ENCODE measurements at regions of chr12 and their contacts with region 1.

Region 1: DNA sequence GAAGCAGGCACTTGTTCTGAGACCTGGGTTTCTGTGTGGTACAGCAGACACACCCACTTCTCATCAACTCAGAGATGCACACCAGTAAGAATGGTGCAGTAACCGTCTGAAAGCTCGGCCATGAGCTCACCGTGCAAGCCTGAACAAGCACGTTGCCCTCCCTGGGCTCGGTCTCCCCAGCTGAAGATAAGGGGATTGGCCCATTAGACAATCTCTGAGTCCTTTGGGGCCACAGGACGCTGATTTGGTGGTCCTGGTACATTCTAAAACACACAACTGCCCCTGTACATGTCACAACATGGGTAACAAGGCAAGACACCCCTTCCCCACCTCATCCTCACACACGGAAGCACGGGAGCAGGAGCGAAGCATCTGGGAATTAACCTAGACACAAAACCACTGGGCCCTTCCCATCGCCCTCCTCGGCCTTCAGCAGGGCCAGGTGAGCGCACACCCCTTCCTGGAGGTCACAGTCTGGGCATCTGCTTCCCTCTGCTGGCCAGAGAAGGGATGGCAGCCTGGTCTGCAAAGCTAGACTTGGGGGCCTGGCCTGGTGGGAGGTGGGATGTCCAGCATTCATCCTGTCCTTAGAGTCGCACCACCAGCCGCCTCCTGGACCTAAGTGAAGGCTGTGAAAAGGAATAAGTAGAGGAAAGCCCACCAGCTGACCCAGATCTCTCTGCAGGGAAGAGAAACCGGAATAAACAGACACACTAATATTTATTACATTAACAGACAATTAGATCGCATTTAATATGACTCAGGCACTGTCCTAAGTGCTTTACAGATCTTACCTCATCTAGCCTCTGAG is 18.9 kb upstream of the SMUG1 start:
- DNase-seq: peak; percentile 58 to 71 (median 64)
- H3K4me3 ChIP-seq: no peak overlapping the region
- H3K4me3 Mint-ChIP-seq: no peak overlapping the region
- H3K27ac ChIP-seq: no peak overlapping the region
- H3K27ac Mint-ChIP-seq: peak overlapping the region in 1 of 7 donors; percentile 30
- H3K4me1 ChIP-seq: peaks cover 6% of the 10 kb centered on the region
- H3K4me1 Mint-ChIP-seq: peaks cover 0 to 4% (median 2%) of the 10 kb centered on the region in 4 donors
- H3K27me3 ChIP-seq: no peaks in the 10 kb centered on the region
- H3K27me3 Mint-ChIP-seq: peaks cover 9 to 23% of the 10 kb centered on the region in 2 donors

Region 2: DNA sequence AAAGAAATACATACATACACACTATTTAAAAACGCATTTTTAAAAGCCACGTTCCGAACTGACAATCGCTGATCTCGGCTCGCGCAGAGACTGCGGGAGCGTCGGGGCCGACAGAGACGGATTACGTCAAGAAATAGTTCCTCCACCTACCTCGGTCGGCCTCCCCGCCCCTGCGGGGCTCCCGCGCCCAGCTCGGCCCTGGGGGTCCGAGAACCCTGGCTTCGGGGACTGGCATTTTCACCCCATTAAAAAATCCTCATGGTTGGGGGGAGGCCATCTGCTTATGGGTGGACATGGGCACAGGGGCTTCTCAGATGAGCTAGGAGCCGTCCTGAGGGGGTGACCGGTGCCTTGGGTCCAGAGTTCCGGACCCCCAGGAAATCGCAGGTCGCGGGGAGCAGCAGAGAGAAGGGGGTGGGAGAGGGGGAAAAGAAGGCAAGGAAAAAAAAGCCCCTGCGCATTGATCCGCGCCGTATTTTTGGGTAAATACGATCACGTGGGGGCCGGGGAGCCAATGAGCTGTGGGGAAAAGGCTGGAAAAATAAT is 208.1 kb before region 1 on chr12:
- CTCF ChIA-PET with region 1: interaction called, 103 read pairs
- POLR2A ChIA-PET with region 1: no interaction called
- intact Hi-C with region 1: no loop called
- DNase-seq: no peak
- H3K4me3 ChIP-seq: no peak overlapping the region
- H3K4me3 Mint-ChIP-seq: peak overlapping the region in 6 of 8 donors; percentile 28 to 70 (median 56)
- H3K27ac ChIP-seq: no peak overlapping the region
- H3K27ac Mint-ChIP-seq: peak overlapping the region in 2 of 7 donors; percentile 51 to 78
- H3K4me1 ChIP-seq: peaks cover 36% of the 10 kb centered on the region
- H3K4me1 Mint-ChIP-seq: peaks cover 7 to 54% (median 22%) of the 10 kb centered on the region in 4 donors
- H3K27me3 ChIP-seq: peaks cover 91% of the 10 kb centered on the region
- H3K27me3 Mint-ChIP-seq: peaks cover 67 to 82% of the 10 kb centered on the region in 2 donors

Region 3: DNA sequence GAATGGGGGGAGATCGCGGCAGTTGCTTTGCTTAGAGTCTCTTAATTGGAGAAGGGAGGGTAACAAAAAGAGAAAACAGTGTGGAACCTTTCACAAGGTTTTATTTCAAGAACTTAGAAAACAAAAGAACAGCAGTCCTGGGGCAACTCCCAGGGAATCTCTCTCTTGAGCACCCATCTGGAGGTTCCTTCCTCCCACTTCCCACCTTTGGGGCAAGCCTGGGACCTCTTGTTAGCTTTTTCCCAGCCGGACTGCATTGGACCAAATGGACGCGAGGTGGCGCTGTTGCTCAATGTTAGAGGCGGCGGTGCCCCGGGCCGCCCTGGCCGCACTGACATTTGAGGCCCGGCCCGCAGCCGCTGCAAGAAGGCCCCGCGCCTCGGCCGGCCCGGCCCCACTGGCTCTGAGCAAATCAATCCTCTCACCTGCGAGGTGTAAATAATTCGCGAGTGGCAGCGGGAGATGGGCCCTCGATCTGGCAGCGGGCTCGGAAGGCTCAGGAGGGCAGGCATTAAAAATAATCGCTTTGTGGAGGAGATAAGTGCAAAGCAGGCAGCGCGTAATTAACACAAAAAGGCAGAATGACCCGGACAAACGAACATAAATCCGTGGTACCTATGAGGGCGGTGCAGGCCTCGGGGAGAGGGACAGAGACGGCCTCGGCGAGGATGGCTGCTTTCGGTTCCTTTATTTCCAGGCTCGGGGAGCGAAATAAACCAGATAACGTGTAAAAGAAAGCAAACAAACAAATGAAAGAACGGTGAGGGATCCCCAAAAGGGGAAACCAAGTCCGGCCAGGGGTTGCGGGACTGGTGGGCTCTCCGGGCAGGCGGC is 201.6 kb before region 1 on chr12:
- CTCF ChIA-PET with region 1: interaction called, 103 read pairs
- POLR2A ChIA-PET with region 1: interaction called, 3 read pairs
- intact Hi-C with region 1: loop called (anchors 1 kb)
- DNase-seq: peak; percentile 76 to 87 (median 80)
- H3K4me3 ChIP-seq: peak overlapping the region in 1 of 2 donors; percentile 44
- H3K4me3 Mint-ChIP-seq: peak overlapping the region; percentile 64 to 92 (median 79)
- H3K27ac ChIP-seq: no peak overlapping the region
- H3K27ac Mint-ChIP-seq: peak overlapping the region in 5 of 7 donors; percentile 5 to 58 (median 18)
- H3K4me1 ChIP-seq: peaks cover 19% of the 10 kb centered on the region
- H3K4me1 Mint-ChIP-seq: peaks cover 10 to 42% (median 26%) of the 10 kb centered on the region in 4 donors
- H3K27me3 ChIP-seq: peaks cover 84% of the 10 kb centered on the region
- H3K27me3 Mint-ChIP-seq: peaks cover 70 to 85% of the 10 kb centered on the region in 2 donors

Region 4: GRCh38 chr12:54017878-54018467 is 189.7 kb before region 1 on chr12:
- CTCF ChIA-PET with region 1: interaction called, 10 read pairs
- POLR2A ChIA-PET with region 1: no interaction called
- intact Hi-C with region 1: no loop called
- DNase-seq: peak; percentile 66 to 74 (median 68)
- H3K4me3 ChIP-seq: peak overlapping the region; percentile 29 to 68
- H3K4me3 Mint-ChIP-seq: peak overlapping the region; percentile 74 to 93 (median 86)
- H3K27ac ChIP-seq: no peak overlapping the region
- H3K27ac Mint-ChIP-seq: peak overlapping the region in 3 of 7 donors; percentile 37 to 57 (median 49)
- H3K4me1 ChIP-seq: peaks cover 21% of the 10 kb centered on the region
- H3K4me1 Mint-ChIP-seq: peaks cover 6 to 31% (median 17%) of the 10 kb centered on the region in 4 donors
- H3K27me3 ChIP-seq: peaks cover 59% of the 10 kb centered on the region
- H3K27me3 Mint-ChIP-seq: peaks cover 49 to 66% of the 10 kb centered on the region in 2 donors

Region 5: DNA sequence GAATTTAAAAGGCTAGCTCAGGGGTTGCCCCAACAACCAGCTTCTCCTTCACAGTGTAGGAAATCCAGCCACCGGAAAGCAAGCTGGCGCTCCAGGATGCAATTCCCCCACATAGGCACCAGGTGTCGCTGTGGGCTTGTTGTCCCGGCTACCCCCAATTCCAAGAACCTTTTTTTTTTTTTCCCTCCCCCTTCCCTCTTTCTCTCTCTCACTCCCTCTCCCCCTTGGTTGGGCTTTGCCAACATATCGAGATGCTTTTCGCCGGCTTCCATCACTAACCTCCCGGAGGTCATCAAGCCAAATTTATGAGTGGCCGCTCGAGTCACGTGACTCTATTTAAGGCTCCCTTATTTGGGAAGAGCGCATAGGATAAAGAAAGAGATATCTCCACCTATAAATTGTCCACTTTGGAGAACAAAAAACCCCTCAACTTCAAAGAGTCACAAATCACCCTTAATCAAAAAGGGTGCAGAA is 175.0 kb before region 1 on chr12 and contains the start of gene HOXC5:
- CTCF ChIA-PET with region 1: interaction called, 24 read pairs
- POLR2A ChIA-PET with region 1: no interaction called
- intact Hi-C with region 1: no loop called
- DNase-seq: peak in 4 of 5 donors; percentile 54 to 60 (median 55)
- H3K4me3 ChIP-seq: no peak within 1 kb of the TSS
- H3K4me3 Mint-ChIP-seq: peak within 1 kb of the TSS; percentile 41 to 82 (median 64)
- H3K27ac ChIP-seq: no peak within 1 kb of the TSS
- H3K27ac Mint-ChIP-seq: peak within 1 kb of the TSS in 4 of 7 donors; percentile 15 to 89 (median 83)
- H3K4me1 ChIP-seq: peaks cover 13% of the 10 kb centered on the region
- H3K4me1 Mint-ChIP-seq: peaks cover 11 to 29% (median 21%) of the 10 kb centered on the region in 4 donors
- H3K27me3 ChIP-seq: peaks cover 71% of the 10 kb centered on the region
- H3K27me3 Mint-ChIP-seq: peaks cover 57 to 63% of the 10 kb centered on the region in 2 donors
- total RNA-seq, gene HOXC5: not detected

Region 6: GRCh38 chr12:54173066-54173726 is 34.5 kb before region 1 on chr12:
- CTCF ChIA-PET with region 1: no interaction called
- POLR2A ChIA-PET with region 1: no interaction called
- intact Hi-C with region 1: no loop called
- DNase-seq: peak in 4 of 5 donors; percentile 12 to 26 (median 19)
- H3K4me3 ChIP-seq: peak overlapping the region in 1 of 2 donors; percentile 34
- H3K4me3 Mint-ChIP-seq: no peak overlapping the region
- H3K27ac ChIP-seq: no peak overlapping the region
- H3K27ac Mint-ChIP-seq: no peak overlapping the region
- H3K4me1 ChIP-seq: peaks cover 14% of the 10 kb centered on the region
- H3K4me1 Mint-ChIP-seq: peaks cover 0 to 7% (median 4%) of the 10 kb centered on the region in 4 donors
- H3K27me3 ChIP-seq: peaks cover 41% of the 10 kb centered on the region
- H3K27me3 Mint-ChIP-seq: peaks cover 4% of the 10 kb centered on the region in 2 donors

Region 7: GRCh38 chr12:54191550-54192022 is 16.1 kb before region 1 on chr12:
- CTCF ChIA-PET with region 1: interaction called, 78 read pairs
- POLR2A ChIA-PET with region 1: no interaction called
- intact Hi-C with region 1: no loop called
- DNase-seq: peak; percentile 79 to 81 (median 79)
- H3K4me3 ChIP-seq: no peak overlapping the region
- H3K4me3 Mint-ChIP-seq: peak overlapping the region in 4 of 8 donors; percentile 11 to 66 (median 32)
- H3K27ac ChIP-seq: no peak overlapping the region
- H3K27ac Mint-ChIP-seq: peak overlapping the region in 2 of 7 donors; percentile 67 to 68
- H3K4me1 ChIP-seq: peaks cover 22% of the 10 kb centered on the region
- H3K4me1 Mint-ChIP-seq: peaks cover 17 to 60% (median 25%) of the 10 kb centered on the region in 4 donors
- H3K27me3 ChIP-seq: peaks cover 23% of the 10 kb centered on the region
- H3K27me3 Mint-ChIP-seq: peaks cover 20 to 32% of the 10 kb centered on the region in 2 donors

Region 8: GRCh38 chr12:54220092-54220557 is 12.4 kb after region 1 on chr12:
- CTCF ChIA-PET with region 1: interaction called, 43 read pairs
- POLR2A ChIA-PET with region 1: interaction called, 11 read pairs
- intact Hi-C with region 1: no loop called
- DNase-seq: peak; percentile 51 to 66 (median 56)
- H3K4me3 ChIP-seq: no peak overlapping the region
- H3K4me3 Mint-ChIP-seq: no peak overlapping the region
- H3K27ac ChIP-seq: no peak overlapping the region
- H3K27ac Mint-ChIP-seq: no peak overlapping the region
- H3K4me1 ChIP-seq: peaks cover 26% of the 10 kb centered on the region
- H3K4me1 Mint-ChIP-seq: peaks cover 16 to 34% (median 24%) of the 10 kb centered on the region in 4 donors
- H3K27me3 ChIP-seq: no peaks in the 10 kb centered on the region
- H3K27me3 Mint-ChIP-seq: no peaks in the 10 kb centered on the region

Region 9: GRCh38 chr12:54251667-54252284 is 44.1 kb after region 1 on chr12:
- CTCF ChIA-PET with region 1: no interaction called
- POLR2A ChIA-PET with region 1: no interaction called
- intact Hi-C with region 1: no loop called
- DNase-seq: peak in 4 of 5 donors; percentile 36 to 52 (median 46)
- H3K4me3 ChIP-seq: no peak overlapping the region
- H3K4me3 Mint-ChIP-seq: no peak overlapping the region
- H3K27ac ChIP-seq: no peak overlapping the region
- H3K27ac Mint-ChIP-seq: peak overlapping the region in 1 of 7 donors; percentile 63
- H3K4me1 ChIP-seq: no peaks in the 10 kb centered on the region
- H3K4me1 Mint-ChIP-seq: peaks cover 4 to 9% (median 6%) of the 10 kb centered on the region in 4 donors
- H3K27me3 ChIP-seq: no peaks in the 10 kb centered on the region
- H3K27me3 Mint-ChIP-seq: no peaks in the 10 kb centered on the region

Measured in CD4-positive, alpha-beta memory T cell (primary cell).